Left ventricle myocardium inferior (tissue), 1 donor: ENCODE measurements at regions of chr5 and their contacts with region 1.

Region 1: DNA sequence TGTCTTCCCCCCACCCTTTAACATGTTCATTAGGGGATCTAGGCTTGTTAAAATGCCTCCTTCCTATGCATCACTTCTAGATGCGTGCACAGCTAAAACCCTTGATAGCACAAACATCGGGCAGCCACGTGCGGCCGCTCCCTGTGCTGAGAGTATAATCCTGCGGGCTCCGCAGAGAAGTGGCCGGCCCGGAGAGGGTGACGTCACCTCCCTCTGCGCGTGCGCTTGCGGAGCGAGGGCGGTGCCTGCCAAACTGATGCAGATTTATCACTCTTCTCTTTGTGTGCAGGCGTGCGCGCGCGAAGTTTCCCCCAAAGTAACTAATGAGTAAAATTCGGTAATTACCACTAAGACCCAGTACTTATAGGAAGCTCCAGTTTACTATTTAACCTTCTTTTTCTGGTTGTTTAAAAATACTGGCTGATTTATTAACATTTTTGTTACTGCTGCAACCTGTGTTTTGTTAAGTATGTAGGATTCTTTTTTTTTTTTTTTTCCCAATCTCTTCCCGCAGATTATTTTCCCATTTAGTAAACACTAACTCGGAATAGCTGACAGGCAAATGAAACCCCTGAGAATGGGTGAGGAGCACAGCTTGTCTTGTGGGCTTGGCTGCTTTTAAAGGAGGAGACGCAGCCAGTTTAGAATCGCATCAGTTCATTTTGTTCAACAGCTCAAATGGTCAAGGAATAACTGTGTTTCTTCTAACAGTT is 121.6 kb downstream of the TRIO start:
- DNase-seq: peak; percentile 91
- H3K4me3 ChIP-seq: peak overlapping the region; percentile 53
- H3K27ac ChIP-seq: peak overlapping the region; percentile 41
- H3K4me1 ChIP-seq: peaks cover 80% of the 10 kb centered on the region
- H3K27me3 ChIP-seq: no peaks in the 10 kb centered on the region
- CTCF ChIP-seq: no peak

Region 2: GRCh38 chr5:14156650-14157493 is 107.9 kb before region 1 on chr5:
- intact Hi-C with region 1: loop called (anchors 10 kb)
- DNase-seq: no peak
- H3K4me3 ChIP-seq: peak overlapping the region; percentile 45
- H3K27ac ChIP-seq: peak overlapping the region; percentile 61
- H3K4me1 ChIP-seq: peaks cover 85% of the 10 kb centered on the region
- H3K27me3 ChIP-seq: no peaks in the 10 kb centered on the region
- CTCF ChIP-seq: no peak

Region 3: DNA sequence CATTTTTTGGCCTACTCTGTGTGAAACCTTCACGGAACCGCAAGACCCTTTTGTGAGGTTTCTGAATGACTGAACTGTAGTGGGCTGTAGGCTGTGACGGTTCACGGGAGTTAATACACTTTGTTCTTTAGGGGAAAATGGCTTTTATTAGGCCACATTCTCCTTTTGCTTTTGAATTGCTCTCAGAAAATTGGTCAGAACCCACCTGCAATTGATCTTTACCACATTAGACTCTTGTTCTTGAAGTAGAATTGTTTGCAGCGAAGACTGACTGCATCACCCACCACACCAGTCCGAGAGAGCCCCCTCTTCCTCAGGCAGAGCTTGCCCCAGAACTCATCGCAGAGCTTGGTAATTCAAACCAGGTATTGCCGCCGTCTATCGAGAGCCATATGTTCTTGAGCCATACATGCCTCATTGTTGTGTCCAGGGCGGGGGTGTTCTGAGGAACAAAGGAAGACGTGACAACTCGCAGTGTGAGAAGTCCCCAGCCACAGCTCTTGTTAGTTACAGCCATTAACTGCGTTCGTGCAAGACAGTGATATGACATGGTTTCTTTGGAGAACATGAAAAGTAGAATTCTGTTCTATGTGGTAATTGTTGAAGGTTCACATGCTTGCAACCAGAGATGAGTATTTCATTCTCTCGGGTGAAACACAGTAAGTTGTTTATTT is 150.4 kb after region 1 on chr5:
- intact Hi-C with region 1: no loop called
- DNase-seq: no peak
- H3K4me3 ChIP-seq: no peak overlapping the region
- H3K27ac ChIP-seq: no peak overlapping the region
- H3K4me1 ChIP-seq: peaks cover 36% of the 10 kb centered on the region
- H3K27me3 ChIP-seq: no peaks in the 10 kb centered on the region
- CTCF ChIP-seq: no peak